Right lobe of liver (tissue), 6 donors: ENCODE measurements at regions of chr15 and their contacts with region 1.

Region 1: GRCh38 chr15:42920519-42921227 is at the start of gene TTBK2:
- DNase-seq: peak; percentile 98 to 99 (median 99)
- ATAC-seq: peak; percentile 98 to 99 (median 98)
- H3K4me3 ChIP-seq: peak within 1 kb of the TSS; percentile 86 to 96 (median 96)
- H3K27ac ChIP-seq: peak within 1 kb of the TSS; percentile 56 to 79 (median 74)
- H3K4me1 ChIP-seq: peaks cover 0 to 7% (median 0%) of the 10 kb centered on the region in 4 donors
- H3K27me3 ChIP-seq: no peaks in the 10 kb centered on the region
- CTCF ChIP-seq: peak; percentile 21 to 37 (median 28)
- POLR2A ChIP-seq: peak; percentile 86
- total RNA-seq, gene TTBK2: 4.9 to 6.8 (median 5.5) TPM

Region 2: DNA sequence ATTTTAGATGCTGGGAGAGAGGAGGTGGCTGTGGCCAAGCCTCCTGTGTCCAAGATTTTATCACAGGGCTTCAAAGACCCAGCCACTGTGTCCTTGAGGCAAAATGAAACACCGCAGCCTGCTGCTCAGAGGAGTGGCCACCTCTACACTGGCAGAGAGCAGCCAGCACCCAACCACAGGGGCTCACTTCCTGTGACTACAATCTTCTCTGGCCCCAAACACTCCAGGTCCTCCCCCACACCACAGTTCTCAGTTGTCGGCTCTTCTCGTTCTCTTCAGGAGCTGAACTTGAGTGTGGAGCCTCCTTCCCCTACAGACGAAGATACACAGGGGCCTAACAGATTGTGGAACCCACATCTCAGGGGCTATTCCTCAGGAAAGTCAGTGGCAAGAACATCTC is 229.4 kb before region 1 on chr15:
- intact Hi-C with region 1: loop called in 1 of 2 experiments (anchors 10 kb)
- DNase-seq: no peak
- ATAC-seq: no peak
- H3K4me3 ChIP-seq: no peak overlapping the region
- H3K27ac ChIP-seq: no peak overlapping the region
- H3K4me1 ChIP-seq: no peaks in the 10 kb centered on the region
- H3K27me3 ChIP-seq: no peaks in the 10 kb centered on the region
- CTCF ChIP-seq: no peak
- POLR2A ChIP-seq: no peak

Region 3: GRCh38 chr15:42704492-42704926 is 216.2 kb before region 1 on chr15:
- intact Hi-C with region 1: loop called (anchors 10 kb)
- DNase-seq: peak in 2 of 3 donors; percentile 56 to 71
- ATAC-seq: peak; percentile 97 to 100 (median 99)
- H3K4me3 ChIP-seq: no peak overlapping the region
- H3K27ac ChIP-seq: no peak overlapping the region
- H3K4me1 ChIP-seq: no peaks in the 10 kb centered on the region
- H3K27me3 ChIP-seq: no peaks in the 10 kb centered on the region
- CTCF ChIP-seq: peak; percentile 85 to 92 (median 88)
- POLR2A ChIP-seq: no peak